Transverse colon (tissue), 4 donors: ENCODE measurements at regions of chr12 and their contacts with region 1.

Region 1: GRCh38 chr12:16307821-16308475 is 30.5 kb upstream of the SLC15A5 start:
- DNase-seq: no peak
- H3K4me3 ChIP-seq: no peak overlapping the region
- H3K27ac ChIP-seq: no peak overlapping the region
- H3K4me1 ChIP-seq: no peaks in the 10 kb centered on the region
- H3K27me3 ChIP-seq: no peaks in the 10 kb centered on the region
- CTCF ChIP-seq: no peak
- EP300 ChIP-seq: no peak
- POLR2A ChIP-seq: no peak

Region 2: DNA sequence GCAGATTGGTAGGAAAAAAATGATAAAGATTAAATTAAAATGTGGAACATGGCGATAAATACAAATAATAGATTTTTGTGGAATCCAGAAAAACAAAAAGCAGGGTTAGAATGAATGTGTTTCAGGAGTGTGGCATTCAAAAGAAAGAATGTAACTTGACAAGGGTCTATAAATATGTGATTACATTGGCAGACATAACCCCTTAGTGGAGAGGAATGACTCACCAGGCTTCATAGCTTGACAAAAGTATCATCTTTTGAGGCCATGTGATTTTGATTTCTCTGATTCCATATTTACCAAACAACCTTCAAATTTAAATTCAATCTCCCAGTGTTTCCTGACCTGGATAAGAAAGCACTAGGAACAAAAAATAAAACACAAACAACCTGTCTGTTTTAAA is 15.1 kb after region 1 on chr12:
- in situ Hi-C with region 1: no loop called
- intact Hi-C with region 1: loop called (anchors 1 kb)
- DNase-seq: no peak
- H3K4me3 ChIP-seq: no peak overlapping the region
- H3K27ac ChIP-seq: no peak overlapping the region
- H3K4me1 ChIP-seq: peaks cover 0 to 29% (median 17%) of the 10 kb centered on the region in 4 donors
- H3K27me3 ChIP-seq: no peaks in the 10 kb centered on the region
- CTCF ChIP-seq: no peak
- EP300 ChIP-seq: no peak
- POLR2A ChIP-seq: no peak

Region 3: DNA sequence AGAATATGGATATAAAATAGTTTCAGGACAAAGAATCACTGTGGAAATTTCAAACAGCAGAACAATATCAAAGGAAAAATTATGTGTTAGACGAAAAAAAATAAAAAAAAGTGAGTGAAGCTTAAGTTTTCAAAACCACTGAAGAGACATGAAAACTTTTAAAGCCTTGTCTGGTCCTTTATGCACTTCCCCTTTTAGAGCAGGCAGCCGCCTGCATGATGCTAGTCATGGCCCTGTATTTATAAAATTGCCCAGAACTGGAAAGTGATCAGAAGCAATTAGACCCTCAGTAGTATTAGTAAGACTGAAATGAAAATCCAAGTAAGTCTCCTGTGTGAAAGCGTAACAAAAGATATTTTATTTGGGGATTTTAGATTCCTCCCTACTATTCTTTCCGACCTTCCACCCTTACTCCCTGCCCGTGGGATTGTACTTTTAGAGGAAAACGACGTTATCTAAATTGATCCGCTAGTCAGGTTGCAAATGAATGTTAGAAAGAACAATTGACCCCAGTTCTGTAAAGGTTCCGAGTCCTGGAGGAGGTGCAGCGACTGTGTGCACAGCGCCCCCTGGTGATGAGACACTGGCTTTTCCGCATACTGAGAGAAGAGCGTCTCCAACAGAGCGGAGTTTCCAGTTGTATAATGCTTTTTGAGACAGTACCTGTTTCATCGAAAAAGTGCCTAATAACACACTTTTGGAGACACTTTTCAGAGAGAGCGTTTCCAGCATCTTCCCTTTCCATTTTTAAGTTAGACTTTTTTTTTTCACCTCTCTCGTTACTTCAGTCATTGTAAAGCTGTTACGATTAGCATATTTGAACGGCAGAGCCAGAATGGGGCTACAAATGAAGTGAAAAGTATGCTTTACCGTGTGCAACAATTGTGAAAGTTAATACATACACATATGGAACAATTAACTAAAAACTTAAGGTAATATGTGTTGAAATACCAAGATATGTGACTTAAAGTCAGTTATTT is 51.9 kb after region 1 on chr12:
- in situ Hi-C with region 1: no loop called
- intact Hi-C with region 1: no loop called
- DNase-seq: peak; percentile 64
- H3K4me3 ChIP-seq: no peak overlapping the region
- H3K27ac ChIP-seq: no peak overlapping the region
- H3K4me1 ChIP-seq: peaks cover 0 to 6% (median 2%) of the 10 kb centered on the region in 4 donors
- H3K27me3 ChIP-seq: no peaks in the 10 kb centered on the region
- CTCF ChIP-seq: peak; percentile 66 to 83 (median 75)
- EP300 ChIP-seq: no peak
- POLR2A ChIP-seq: no peak